ENCODE measurements at regions of chr2 and their contacts with region 1.

Region 1: GRCh38 chr2:164737612-164738081 is 104.0 kb downstream of the COBLL1 start:
- DNase-seq: peak; percentile 44 to 68 (median 62)
- ATAC-seq: peak; percentile 92
- H3K4me3 ChIP-seq: no peak overlapping the region
- H3K27ac ChIP-seq: no peak overlapping the region
- H3K4me1 ChIP-seq: peaks cover 0 to 15% of the 10 kb centered on the region in 2 donors
- H3K27me3 ChIP-seq: no peaks in the 10 kb centered on the region
- CTCF ChIP-seq: peak; percentile 62 to 63

Region 2: DNA sequence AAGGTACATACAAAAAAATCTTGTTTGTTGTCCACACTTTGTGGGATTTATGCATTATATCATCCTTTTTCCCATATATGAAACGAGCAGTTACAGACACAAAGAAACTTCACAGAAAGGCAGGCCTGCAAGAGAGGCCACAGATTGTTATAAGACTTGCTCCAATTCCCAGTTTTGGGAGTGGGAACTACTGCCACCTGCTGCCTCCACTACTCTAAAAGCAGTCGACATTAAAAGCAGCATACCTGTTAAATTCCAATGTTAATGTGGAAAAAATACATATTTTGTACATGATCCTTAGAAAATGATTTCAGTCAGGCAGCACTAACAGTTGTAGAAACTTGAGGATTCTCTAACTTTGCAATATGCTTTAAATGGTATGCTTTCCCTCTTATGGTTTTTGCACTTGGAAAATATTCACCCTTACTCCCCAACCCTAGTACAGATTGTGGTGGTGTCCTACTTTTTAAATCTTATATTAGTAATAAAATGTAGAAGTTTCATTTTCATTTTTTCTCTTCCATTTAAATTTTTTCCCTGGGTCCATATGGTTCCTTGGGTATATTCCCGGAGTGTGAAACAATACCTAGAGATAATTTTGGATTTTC is 179.8 kb after region 1 on chr2:
- intact Hi-C with region 1: loop called in 1 of 2 experiments (anchors 10 kb)
- DNase-seq: peak in 2 of 4 donors; percentile 41 to 54
- ATAC-seq: peak; percentile 71
- H3K4me3 ChIP-seq: no peak overlapping the region
- H3K27ac ChIP-seq: no peak overlapping the region
- H3K4me1 ChIP-seq: peaks cover 0 to 14% of the 10 kb centered on the region in 2 donors
- H3K27me3 ChIP-seq: no peaks in the 10 kb centered on the region
- CTCF ChIP-seq: peak; percentile 15 to 47

Measured in left lung (tissue), 14 donors.